CD4-positive, alpha-beta T cell (primary cell): ENCODE measurements at regions of chr7 and their contacts with region 1.

Region 1: DNA sequence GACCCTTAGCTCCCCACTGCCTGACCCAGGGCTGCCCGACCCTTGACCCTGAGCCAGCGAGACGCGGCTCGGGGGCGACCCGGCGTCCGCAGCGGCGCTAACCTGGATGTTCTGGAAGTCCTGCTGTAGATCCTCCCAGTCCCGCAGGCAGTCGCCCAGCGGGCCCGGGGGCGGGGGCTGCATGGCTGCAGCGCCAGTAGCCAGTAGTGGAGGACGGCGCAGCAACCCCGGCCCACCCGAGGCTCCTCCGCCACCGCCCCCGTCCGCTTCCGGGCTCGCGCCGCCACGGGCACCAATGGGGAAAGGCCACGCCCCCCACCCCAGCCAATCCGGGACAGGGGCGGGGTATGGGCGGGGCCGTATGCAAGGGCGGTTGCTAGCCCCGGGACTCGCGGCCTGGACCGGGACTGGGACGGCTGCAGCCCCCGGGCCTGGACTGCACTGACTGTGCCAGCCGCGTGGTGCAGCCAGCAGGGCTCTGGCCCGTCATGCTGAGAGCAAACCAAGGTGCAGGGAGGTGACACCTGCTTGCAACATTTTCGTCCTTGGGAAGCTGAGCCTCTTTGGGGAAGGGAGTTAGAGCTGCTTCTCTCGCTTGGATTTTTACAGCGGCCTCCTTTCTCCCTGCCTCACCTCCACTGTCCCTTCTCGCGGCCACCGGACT is at the start of gene TMEM120A:
- DNase-seq: peak; percentile 88 to 98 (median 93)
- ATAC-seq: peak; percentile 98
- H3K4me3 ChIP-seq: peak within 1 kb of the TSS; percentile 94
- H3K4me3 Mint-ChIP-seq: peak within 1 kb of the TSS; percentile 73
- H3K27ac ChIP-seq: peak within 1 kb of the TSS in 1 of 2 donors; percentile 21
- H3K27ac Mint-ChIP-seq: no peak within 1 kb of the TSS
- H3K4me1 ChIP-seq: peaks cover 28% of the 10 kb centered on the region
- H3K4me1 Mint-ChIP-seq: peaks cover 38% of the 10 kb centered on the region
- H3K27me3 ChIP-seq: no peaks in the 10 kb centered on the region
- H3K27me3 Mint-ChIP-seq: no peaks in the 10 kb centered on the region
- CTCF ChIP-seq: peak; percentile 30
- total RNA-seq, gene TMEM120A: 10.0 to 10.8 TPM

Region 2: DNA sequence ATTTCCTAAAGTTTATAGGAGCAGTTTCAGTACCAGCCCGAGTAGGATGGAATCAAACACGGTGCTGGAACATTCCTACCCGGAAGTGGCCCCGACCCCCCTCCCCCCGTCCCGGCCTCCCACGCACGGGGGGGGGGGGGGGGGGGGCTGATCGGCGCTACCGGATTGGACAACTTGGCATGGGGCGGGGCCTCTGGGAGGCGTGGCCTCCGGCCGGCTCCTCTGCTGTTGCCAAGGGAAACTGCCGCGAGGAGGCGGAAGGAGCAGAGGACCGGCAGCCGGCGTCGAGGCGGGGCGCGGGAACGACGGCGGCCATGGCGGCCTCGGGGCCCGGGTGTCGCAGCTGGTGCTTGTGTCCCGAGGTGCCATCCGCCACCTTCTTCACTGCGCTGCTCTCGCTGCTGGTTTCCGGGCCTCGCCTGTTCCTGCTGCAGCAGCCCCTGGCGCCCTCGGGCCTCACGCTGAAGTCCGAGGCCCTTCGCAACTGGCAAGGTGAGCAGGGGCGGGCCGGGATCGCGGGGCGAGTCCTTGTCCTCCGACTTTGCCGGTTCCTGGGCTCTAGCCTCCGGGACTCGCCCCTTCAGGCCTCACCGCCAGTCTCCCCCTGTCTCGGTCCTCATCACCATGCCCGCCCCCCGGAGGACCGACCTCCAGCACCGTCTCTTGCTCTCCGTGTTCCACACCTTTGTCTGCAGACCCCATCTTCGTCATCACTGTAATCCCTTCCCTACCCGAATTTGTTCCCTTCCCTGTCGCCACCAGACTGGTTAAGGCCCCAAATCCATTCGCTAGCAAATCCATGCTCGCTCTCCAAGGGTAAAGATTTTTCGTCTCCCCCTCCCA is 115.5 kb before region 1 on chr7 and contains the start of gene RHBDD2:
- CTCF ChIA-PET with region 1: no interaction called
- POLR2A ChIA-PET with region 1: interaction called, 3 read pairs
- intact Hi-C with region 1: loop called (anchors 2 to 5 kb)
- DNase-seq: peak; percentile 95 to 99 (median 97)
- ATAC-seq: peak; percentile 87
- H3K4me3 ChIP-seq: peak within 1 kb of the TSS; percentile 96
- H3K4me3 Mint-ChIP-seq: peak within 1 kb of the TSS; percentile 92
- H3K27ac ChIP-seq: peak within 1 kb of the TSS; percentile 85 to 90
- H3K27ac Mint-ChIP-seq: peak within 1 kb of the TSS; percentile 90
- H3K4me1 ChIP-seq: peaks cover 31% of the 10 kb centered on the region
- H3K4me1 Mint-ChIP-seq: peaks cover 24% of the 10 kb centered on the region
- H3K27me3 ChIP-seq: no peaks in the 10 kb centered on the region
- H3K27me3 Mint-ChIP-seq: no peaks in the 10 kb centered on the region
- CTCF ChIP-seq: no peak
- total RNA-seq, gene RHBDD2: 199 to 208 TPM

Region 3: GRCh38 chr7:76047811-76048667 is 53.5 kb after region 1 on chr7 and contains the starts of genes MDH2 and STYXL1:
- CTCF ChIA-PET with region 1: no interaction called
- POLR2A ChIA-PET with region 1: interaction called, 3 read pairs
- intact Hi-C with region 1: loop called in 1 of 2 experiments (anchors 2 kb)
- DNase-seq: peak; percentile 69 to 94 (median 78)
- ATAC-seq: peak; percentile 76
- H3K4me3 ChIP-seq: peak within 1 kb of the TSS; percentile 100
- H3K4me3 Mint-ChIP-seq: peak within 1 kb of the TSS; percentile 93
- H3K27ac ChIP-seq: peak within 1 kb of the TSS; percentile 65 to 96
- H3K27ac Mint-ChIP-seq: peak within 1 kb of the TSS; percentile 96
- H3K4me1 ChIP-seq: peaks cover 57% of the 10 kb centered on the region
- H3K4me1 Mint-ChIP-seq: peaks cover 65% of the 10 kb centered on the region
- H3K27me3 ChIP-seq: no peaks in the 10 kb centered on the region
- H3K27me3 Mint-ChIP-seq: no peaks in the 10 kb centered on the region
- CTCF ChIP-seq: no peak
- total RNA-seq, gene MDH2: 66.4 to 68.3 TPM
- total RNA-seq, gene STYXL1: 8.4 to 8.5 TPM

Region 4: DNA sequence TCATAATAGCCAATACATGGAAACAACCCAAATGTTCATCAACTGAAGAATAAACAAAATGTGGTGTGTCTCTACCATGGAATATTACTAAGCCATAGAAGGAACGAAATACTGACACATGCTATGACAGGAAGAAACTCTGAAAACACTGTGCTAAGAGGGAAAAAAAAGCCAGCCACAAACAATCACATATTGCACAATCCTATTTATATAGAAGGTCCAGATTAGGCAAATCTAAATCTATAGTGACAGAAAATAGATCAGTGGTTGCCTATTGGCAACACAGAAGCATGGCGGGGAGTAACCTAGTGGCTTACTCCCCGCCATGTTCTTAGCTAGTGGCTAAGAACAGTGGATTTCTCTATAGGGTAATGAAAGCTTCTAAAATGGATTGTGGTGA is 101.4 kb after region 1 on chr7:
- CTCF ChIA-PET with region 1: no interaction called
- POLR2A ChIA-PET with region 1: no interaction called
- intact Hi-C with region 1: no loop called
- DNase-seq: no peak
- ATAC-seq: no peak
- H3K4me3 ChIP-seq: no peak overlapping the region
- H3K4me3 Mint-ChIP-seq: no peak overlapping the region
- H3K27ac ChIP-seq: no peak overlapping the region
- H3K27ac Mint-ChIP-seq: no peak overlapping the region
- H3K4me1 ChIP-seq: no peaks in the 10 kb centered on the region
- H3K4me1 Mint-ChIP-seq: no peaks in the 10 kb centered on the region
- H3K27me3 ChIP-seq: peaks cover 0 to 4% of the 10 kb centered on the region in 2 experiments
- H3K27me3 Mint-ChIP-seq: no peaks in the 10 kb centered on the region
- CTCF ChIP-seq: no peak

Region 5: DNA sequence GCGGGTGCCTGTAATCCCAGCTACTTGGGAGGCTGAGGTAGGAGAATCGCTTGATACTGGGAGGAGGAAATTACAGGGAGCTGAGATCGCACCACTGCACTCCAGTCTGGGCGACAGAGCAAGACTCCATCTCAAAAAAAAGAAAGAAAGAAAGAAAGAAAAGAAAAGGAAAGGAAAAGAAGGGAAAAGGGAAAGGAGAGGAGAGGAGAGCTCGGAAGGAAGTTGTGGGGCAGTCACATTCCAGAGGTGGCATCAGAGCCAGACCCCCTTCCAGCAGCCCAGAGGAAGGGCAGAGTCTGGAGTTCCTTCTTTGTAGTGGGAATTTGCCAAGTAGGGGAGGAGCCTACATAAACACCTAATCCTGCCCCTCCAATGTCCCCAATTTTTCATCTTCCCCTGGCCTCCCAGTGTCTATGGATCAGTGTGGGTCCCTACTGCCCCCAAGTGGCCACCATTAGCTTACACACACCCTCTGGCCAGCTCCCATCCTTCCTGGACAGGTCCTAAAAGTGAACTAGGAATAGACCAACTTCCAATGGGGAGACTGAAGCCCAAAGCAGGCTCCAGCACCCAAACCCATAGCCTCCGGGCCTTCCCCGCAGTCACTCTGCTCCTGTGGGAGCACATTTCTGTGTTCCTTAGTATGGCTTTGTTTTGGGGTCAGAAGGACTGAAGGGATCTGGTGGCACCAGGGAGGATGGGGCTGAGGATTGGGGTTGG is 268.3 kb after region 1 on chr7:
- CTCF ChIA-PET with region 1: no interaction called
- POLR2A ChIA-PET with region 1: no interaction called
- intact Hi-C with region 1: no loop called
- DNase-seq: peak in 4 of 14 experiments; percentile 36 to 60 (median 48)
- ATAC-seq: peak; percentile 30
- H3K4me3 ChIP-seq: no peak overlapping the region
- H3K4me3 Mint-ChIP-seq: no peak overlapping the region
- H3K27ac ChIP-seq: no peak overlapping the region
- H3K27ac Mint-ChIP-seq: no peak overlapping the region
- H3K4me1 ChIP-seq: peaks cover 12% of the 10 kb centered on the region
- H3K4me1 Mint-ChIP-seq: peaks cover 1% of the 10 kb centered on the region
- H3K27me3 ChIP-seq: peaks cover 27 to 36% of the 10 kb centered on the region in 2 experiments
- H3K27me3 Mint-ChIP-seq: peaks cover 58% of the 10 kb centered on the region
- CTCF ChIP-seq: peak; percentile 47

Region 6: DNA sequence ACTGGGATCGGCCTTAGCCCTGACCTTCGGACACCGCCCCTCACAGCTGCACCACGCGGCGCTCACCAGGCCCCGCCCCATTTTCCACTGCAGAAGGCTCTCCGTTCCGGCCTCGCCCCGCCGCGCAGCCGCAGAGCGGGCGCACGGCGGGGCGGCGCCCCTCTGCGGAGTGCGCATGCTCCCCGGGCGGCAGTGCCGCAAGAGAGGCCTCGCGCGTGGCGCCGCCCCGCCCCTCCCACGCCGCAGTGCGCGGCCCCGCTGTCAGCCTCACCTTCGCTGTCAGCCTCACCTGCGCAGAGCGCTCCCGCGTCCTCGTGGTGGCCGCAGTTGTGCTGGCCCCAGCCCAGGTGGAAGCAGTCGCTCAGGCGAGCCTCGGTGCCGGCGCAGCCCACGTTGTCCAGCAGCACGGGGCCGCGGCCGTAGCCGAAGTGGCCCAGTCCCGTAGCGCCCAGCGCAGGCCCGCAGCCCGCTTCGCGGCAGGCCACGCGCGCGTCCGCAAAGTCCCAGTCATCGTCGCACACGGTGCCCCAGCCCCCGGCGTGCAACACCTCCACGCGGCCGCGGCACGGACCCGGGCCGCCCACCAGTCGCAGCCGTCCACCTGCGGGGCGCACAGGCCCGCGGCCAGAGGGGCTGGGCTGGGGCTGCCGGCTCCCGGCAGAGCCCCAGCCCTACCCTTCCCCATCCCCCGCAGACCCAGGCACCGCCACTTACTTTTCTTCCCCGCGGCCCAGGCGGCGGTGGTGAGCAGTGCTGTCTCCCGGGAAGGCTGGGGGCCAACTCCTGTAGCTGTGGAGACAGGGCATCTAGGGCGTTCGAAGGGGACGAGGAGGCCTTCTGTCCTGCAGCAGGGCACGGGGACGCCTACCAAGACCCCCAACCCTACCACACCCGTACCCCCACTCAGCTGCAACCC is 398.9 kb after region 1 on chr7:
- CTCF ChIA-PET with region 1: no interaction called
- POLR2A ChIA-PET with region 1: no interaction called
- intact Hi-C with region 1: loop called in 1 of 2 experiments (anchors 5 kb)
- DNase-seq: peak; percentile 81 to 97 (median 90)
- ATAC-seq: peak; percentile 81
- H3K4me3 ChIP-seq: peak overlapping the region; percentile 60
- H3K4me3 Mint-ChIP-seq: peak overlapping the region; percentile 88
- H3K27ac ChIP-seq: peak overlapping the region; percentile 42 to 46
- H3K27ac Mint-ChIP-seq: peak overlapping the region; percentile 88
- H3K4me1 ChIP-seq: peaks cover 33% of the 10 kb centered on the region
- H3K4me1 Mint-ChIP-seq: peaks cover 22% of the 10 kb centered on the region
- H3K27me3 ChIP-seq: no peaks in the 10 kb centered on the region
- H3K27me3 Mint-ChIP-seq: no peaks in the 10 kb centered on the region
- CTCF ChIP-seq: no peak